Head of caudate nucleus (tissue), 42 donors: ENCODE measurements at regions of chr19 and their contacts with region 1.

Region 1: DNA sequence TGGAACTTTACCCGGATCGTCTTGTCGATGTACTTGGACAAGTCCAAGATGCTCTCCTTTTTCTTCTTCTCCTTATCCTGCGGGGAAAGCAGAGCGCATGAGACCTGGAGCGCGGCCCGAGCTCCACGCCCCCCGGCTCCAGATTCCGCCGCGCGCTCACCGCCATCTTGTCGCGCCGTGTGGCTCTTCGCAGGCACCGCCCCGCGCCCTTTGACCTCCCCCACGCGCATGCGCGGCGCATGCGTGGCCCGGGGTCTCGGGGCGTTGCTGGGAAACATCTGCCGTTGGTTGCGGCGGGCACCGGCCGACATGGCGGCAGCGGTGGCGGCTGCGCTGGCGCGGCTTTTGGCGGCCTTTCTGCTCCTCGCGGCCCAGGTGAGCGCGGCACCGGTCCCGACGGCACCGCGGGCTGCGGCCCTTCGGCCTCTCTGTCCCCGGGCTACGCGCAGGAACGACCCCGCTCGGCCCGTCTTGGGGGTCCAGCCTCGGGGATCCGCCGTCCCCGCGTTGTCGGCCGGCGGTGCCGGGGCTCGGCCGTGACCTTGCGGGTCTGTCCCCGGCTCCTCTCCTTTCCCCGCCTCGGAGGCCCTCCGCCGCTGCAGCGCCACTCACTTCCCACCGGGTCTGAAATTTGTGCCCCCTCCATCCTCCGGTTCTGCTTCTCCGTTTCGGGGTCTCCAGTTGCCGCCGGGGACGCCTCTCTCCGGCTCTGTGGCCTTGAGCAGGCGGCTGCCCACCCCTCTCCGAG is at the starts of genes LSM7 and SPPL2B:
- DNase-seq: peak; percentile 60 to 96 (median 92)

Region 2: GRCh38 chr19:2151339-2152229 is 177.0 kb before region 1 on chr19 and contains the start of gene AP3D1:
- intact Hi-C with region 1: loop called (anchors 5 kb)
- DNase-seq: peak; percentile 97 to 100 (median 99)

Region 3: DNA sequence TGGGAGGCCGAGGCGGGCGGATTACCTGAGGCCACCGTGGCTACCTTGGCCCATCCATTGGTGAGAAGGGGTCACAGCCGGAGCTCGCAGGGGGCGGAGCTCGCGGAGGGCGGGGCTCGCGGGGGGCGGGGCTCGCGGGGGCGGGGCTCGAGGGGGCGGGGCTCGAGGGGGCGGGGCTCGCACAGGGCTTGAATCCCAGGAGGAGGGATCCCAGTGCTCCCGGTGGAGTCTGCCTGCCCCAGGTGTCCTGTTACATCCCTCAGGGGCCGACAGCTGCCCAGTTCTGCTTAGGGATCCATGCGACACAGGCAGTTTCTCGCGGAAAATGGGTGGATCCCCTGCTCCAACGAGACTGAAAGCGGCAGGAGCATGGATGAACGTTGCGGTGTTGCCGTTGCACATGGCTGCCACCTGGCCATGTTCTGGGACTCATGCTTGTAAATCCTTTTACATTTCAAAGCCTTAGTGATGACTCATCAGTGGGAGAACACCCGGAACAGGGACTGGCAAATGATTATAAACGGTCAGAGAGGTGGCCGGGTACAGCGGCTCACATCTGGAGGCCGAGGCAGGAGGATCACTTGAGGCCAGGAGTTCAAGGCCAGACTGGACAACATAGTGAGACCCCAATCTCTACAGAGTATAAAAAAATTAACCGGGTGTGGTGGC is 56.6 kb after region 1 on chr19:
- intact Hi-C with region 1: loop called (anchors 5 kb)
- DNase-seq: peak in 31 of 42 donors; percentile 10 to 68 (median 32)